HepG2 (cell line): ENCODE measurements at regions of chr14 and their contacts with region 1.

Region 1: DNA sequence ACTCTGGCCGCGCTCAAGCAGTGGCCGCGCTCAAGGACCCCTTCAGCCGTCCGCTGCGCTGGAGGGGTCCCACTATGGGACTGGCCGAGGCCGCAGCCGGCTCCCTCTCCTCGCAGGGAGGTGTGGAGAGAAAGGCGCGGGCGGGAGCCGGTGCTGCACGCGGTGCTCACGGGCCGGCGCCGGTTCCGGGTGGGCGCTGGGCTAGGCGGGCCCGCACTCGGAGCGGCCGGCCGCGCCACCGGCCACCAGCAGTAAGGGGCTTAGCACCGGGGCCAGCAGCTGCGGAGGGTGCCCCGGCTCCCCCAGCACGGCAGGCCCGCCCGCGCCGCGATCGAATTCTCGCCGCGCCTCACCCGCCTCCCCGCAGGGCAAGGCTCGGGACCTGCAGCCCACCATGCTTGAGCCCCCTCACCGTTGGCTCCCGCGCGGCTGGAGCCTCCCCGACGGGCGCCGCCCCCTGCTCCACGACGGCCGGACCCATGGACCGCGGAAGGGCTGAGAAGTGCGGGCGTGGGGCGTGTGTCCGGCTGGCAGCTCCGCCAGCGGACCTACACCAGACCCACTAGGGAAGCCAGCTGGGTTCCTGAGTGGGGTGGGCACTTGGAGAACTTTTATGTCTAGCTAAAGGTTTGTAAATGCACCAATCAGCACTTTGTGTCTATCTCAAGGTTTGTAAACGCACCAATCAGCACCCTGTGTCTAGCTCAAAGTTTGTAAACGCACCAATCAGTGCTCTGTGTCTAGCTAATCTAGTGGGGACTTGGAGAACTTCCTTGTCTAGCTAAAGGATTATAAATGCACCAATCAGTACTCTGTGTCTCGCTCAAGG is 49.5 kb downstream of the KLHL28 start:
- DNase-seq: no peak
- ATAC-seq: no peak
- H3K4me3 ChIP-seq: no peak overlapping the region
- H3K27ac ChIP-seq: no peak overlapping the region
- H3K4me1 ChIP-seq: peaks cover 12% of the 10 kb centered on the region
- H3K27me3 ChIP-seq: no peaks in the 10 kb centered on the region; a peak in 1 of 5 replicates
- CTCF ChIP-seq: no peak
- EP300 ChIP-seq: no peak
- POLR2A ChIP-seq: no peak
- RAD21 ChIP-seq: no peak

Region 2: DNA sequence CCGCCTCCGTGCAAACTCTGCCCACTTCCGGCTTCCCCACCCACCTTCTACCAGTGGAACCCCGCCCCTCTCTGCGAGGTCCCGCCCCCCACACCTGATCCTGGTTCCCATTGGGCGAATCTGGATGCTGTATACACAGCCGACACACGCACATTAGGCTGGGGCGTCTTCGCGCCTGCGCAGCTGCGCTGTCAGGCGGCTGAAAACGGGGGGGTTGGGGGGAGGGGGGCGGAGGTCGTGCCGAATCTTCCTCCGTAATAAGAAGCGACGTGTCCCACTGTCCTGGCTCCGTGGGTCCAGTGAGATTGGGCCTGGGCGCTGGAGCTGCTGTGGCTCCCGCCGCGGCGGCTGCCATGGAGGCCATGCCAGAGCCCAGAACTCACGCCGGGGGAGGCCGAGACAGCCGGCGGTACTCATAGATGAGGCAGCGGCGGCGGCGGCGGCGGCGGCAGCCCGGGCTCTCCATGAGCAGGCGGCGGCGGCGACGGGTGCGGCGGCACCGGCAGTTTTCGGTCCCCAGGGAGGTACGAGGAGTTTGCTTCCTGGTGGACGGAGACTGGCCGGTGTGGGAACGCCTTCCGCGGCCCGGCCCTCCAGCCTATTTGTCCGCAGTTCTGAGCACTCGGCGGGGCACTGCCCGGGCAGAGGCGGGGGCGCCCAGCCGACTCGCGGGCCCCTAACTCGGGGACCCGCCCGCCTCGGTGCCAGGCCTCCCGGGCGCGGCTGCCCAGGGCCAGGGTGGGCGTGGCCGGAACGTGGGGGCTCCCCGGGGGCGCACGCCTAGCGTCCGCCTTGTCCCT is 15.0 kb before region 1 on chr14:
- CTCF ChIA-PET with region 1: no interaction called
- POLR2A ChIA-PET with region 1: interaction called, 54 read pairs
- in situ Hi-C with region 1: no loop called
- intact Hi-C with region 1: no loop called
- DNase-seq: peak; percentile 94
- ATAC-seq: peak; percentile 94
- H3K4me3 ChIP-seq: peak overlapping the region; percentile 83 to 87 (median 87)
- H3K27ac ChIP-seq: peak overlapping the region; percentile 98
- H3K4me1 ChIP-seq: peaks cover 32% of the 10 kb centered on the region
- H3K27me3 ChIP-seq: no peaks in the 10 kb centered on the region
- CTCF ChIP-seq: no peak
- EP300 ChIP-seq: no peak
- POLR2A ChIP-seq: peak; percentile 86 to 88
- RAD21 ChIP-seq: peak; percentile 36; the same call in 1 of the 2 replicates

Region 3: GRCh38 chr14:44961604-44962333 is 49.5 kb after region 1 on chr14 and contains the starts of genes KLHL28 and TOGARAM1:
- CTCF ChIA-PET with region 1: no interaction called
- POLR2A ChIA-PET with region 1: interaction called, 19 read pairs
- in situ Hi-C with region 1: no loop called
- intact Hi-C with region 1: loop called (anchors 1 kb)
- DNase-seq: peak; percentile 100
- ATAC-seq: peak; percentile 90
- H3K4me3 ChIP-seq: peak within 1 kb of the TSS; percentile 83 to 88 (median 84)
- H3K27ac ChIP-seq: peak within 1 kb of the TSS; percentile 84
- H3K4me1 ChIP-seq: peaks cover 34% of the 10 kb centered on the region
- H3K27me3 ChIP-seq: no peaks in the 10 kb centered on the region; a peak in 1 of 5 replicates
- CTCF ChIP-seq: no peak; the same call in 1 of the 2 replicates
- EP300 ChIP-seq: peak in 1 of 2 experiments; percentile 46; a peak in 2 of 4 replicates
- POLR2A ChIP-seq: peak; percentile 94 to 95
- RAD21 ChIP-seq: 0 out of 2 replicates have a peak, but pooled peaks have one; percentile 44
- total RNA-seq, gene KLHL28: 6.6 and 9.8 TPM in 2 replicates
- total RNA-seq, gene TOGARAM1: 9.8 and 10.6 TPM in 2 replicates

Region 4: DNA sequence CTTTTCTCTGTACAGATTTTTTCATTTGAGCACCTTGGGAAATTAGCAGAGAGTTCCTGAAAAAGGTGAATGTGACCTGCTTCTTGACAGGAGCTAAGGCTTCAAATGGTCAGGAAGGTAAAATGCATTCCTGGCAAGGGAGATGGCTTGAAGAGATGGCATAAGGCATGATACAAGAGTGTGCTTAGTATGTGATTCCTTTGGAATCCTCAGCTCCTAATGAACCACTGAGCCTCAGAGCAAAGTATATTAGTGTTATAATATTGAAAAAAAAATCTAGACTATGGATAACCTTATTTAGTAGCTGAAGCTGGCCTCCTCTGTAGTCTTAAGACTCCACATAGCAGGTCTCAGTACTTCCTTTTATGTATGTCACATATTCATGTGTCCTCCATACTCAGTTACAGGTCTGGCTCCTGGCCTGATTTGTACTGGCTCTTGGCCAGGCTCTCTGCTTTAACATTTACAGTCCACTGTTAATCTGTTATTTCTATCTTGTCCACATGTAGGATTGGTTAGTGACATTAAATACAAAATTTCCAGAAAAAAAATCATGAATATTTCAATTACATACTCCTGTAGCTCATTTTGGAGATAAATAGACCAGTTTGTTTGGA is 67.6 kb after region 1 on chr14:
- CTCF ChIA-PET with region 1: no interaction called
- POLR2A ChIA-PET with region 1: no interaction called
- in situ Hi-C with region 1: no loop called
- intact Hi-C with region 1: no loop called
- DNase-seq: no peak
- ATAC-seq: no peak
- H3K4me3 ChIP-seq: no peak overlapping the region
- H3K27ac ChIP-seq: no peak overlapping the region
- H3K4me1 ChIP-seq: no peaks in the 10 kb centered on the region
- H3K27me3 ChIP-seq: no peaks in the 10 kb centered on the region
- CTCF ChIP-seq: no peak
- EP300 ChIP-seq: no peak
- POLR2A ChIP-seq: no peak
- RAD21 ChIP-seq: no peak

Region 5: GRCh38 chr14:45201905-45202304 is 289.6 kb after region 1 on chr14:
- CTCF ChIA-PET with region 1: interaction called, 8 read pairs
- POLR2A ChIA-PET with region 1: no interaction called
- in situ Hi-C with region 1: no loop called
- intact Hi-C with region 1: loop called (anchors 1 kb)
- DNase-seq: peak; percentile 14
- ATAC-seq: peak; percentile 99
- H3K4me3 ChIP-seq: no peak overlapping the region
- H3K27ac ChIP-seq: no peak overlapping the region
- H3K4me1 ChIP-seq: no peaks in the 10 kb centered on the region
- H3K27me3 ChIP-seq: no peaks in the 10 kb centered on the region
- CTCF ChIP-seq: peak; percentile 62
- EP300 ChIP-seq: no peak
- POLR2A ChIP-seq: no peak
- RAD21 ChIP-seq: no peak

Region 6: DNA sequence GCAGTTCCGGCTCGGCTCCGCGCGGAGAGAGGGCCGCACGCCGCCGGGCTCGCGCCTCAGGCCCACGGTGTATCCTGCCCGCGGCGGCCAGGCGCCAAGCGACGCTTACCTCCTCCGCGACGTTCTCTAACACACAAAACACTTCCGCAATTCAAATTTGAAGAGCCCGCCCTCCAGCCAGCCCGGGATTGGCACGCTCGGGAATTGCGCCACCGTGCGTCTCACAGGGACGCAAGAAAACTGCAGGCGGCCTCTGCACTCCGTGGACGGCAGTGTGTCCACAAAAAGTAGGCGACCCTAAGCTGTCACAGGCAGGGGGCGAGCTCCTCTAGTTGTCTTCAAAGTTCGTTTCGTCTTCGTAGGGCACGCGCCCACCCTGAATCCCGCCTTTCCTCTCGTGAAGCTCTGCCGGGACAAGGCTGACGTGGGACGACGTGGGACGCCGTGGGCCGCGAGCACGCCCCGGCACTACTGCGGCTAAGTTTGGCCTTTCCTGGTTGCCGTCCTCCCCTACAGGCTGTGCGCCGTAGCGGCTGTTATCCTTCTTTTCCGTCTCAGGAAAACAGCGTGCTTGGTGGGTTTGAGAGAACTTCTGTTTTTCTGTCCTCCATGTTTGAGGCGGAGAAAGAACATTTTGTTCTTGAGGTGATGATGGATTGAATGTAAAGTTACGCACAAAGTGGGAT is 341.0 kb after region 1 on chr14 and contains the start of gene MIS18BP1:
- CTCF ChIA-PET with region 1: no interaction called
- POLR2A ChIA-PET with region 1: interaction called, 10 read pairs
- in situ Hi-C with region 1: no loop called
- intact Hi-C with region 1: loop called (anchors 5 kb)
- DNase-seq: peak; percentile 96
- ATAC-seq: peak; percentile 95
- H3K4me3 ChIP-seq: peak within 1 kb of the TSS; percentile 89 to 100 (median 91)
- H3K27ac ChIP-seq: peak within 1 kb of the TSS; percentile 97
- H3K4me1 ChIP-seq: peaks cover 36% of the 10 kb centered on the region
- H3K27me3 ChIP-seq: no peaks in the 10 kb centered on the region; a peak in 1 of 5 replicates
- CTCF ChIP-seq: peak; percentile 87
- EP300 ChIP-seq: peak; percentile 7 to 26; a peak in 2 of 4 replicates
- POLR2A ChIP-seq: peak; percentile 64 to 78
- RAD21 ChIP-seq: no peak; the same call in none of the 2 replicates
- total RNA-seq, gene MIS18BP1: 36.4 and 54.6 TPM in 2 replicates

Region 7: GRCh38 chr14:45267071-45267470 is 354.8 kb after region 1 on chr14:
- CTCF ChIA-PET with region 1: interaction called, 15 read pairs
- POLR2A ChIA-PET with region 1: interaction called, 9 read pairs
- in situ Hi-C with region 1: loop called (anchors 5 kb)
- intact Hi-C with region 1: loop called (anchors 1 kb)
- DNase-seq: no peak
- ATAC-seq: no peak
- H3K4me3 ChIP-seq: no peak overlapping the region
- H3K27ac ChIP-seq: no peak overlapping the region
- H3K4me1 ChIP-seq: no peaks in the 10 kb centered on the region
- H3K27me3 ChIP-seq: 0 out of 5 replicates have a peak, but pooled peaks cover 0 to 3% of the 10 kb centered on the region in 2 experiments
- CTCF ChIP-seq: no peak
- EP300 ChIP-seq: no peak
- POLR2A ChIP-seq: no peak
- RAD21 ChIP-seq: no peak